ENCODE measurements at regions of chr22 and their contacts with region 1.

Region 1: GRCh38 chr22:30591588-30592359 is at the start of gene PES1:
- DNase-seq: peak; percentile 87
- ATAC-seq: peak; percentile 95
- H3K4me3 Mint-ChIP-seq: no peak within 1 kb of the TSS
- H3K27ac Mint-ChIP-seq: no peak within 1 kb of the TSS
- H3K4me1 Mint-ChIP-seq: no peaks in the 10 kb centered on the region
- H3K27me3 Mint-ChIP-seq: peaks cover 1% of the 10 kb centered on the region
- CTCF ChIP-seq: no peak
- total RNA-seq, gene PES1: 124 TPM in 2 replicates

Region 2: GRCh38 chr22:30262917-30263741 is 328.6 kb before region 1 on chr22:
- CTCF ChIA-PET with region 1: no interaction called
- POLR2A ChIA-PET with region 1: no interaction called
- intact Hi-C with region 1: loop called (anchors 5 kb)
- DNase-seq: peak; percentile 72
- ATAC-seq: peak; percentile 13
- H3K4me3 Mint-ChIP-seq: peak overlapping the region; percentile 59
- H3K27ac Mint-ChIP-seq: peak overlapping the region; percentile 18
- H3K4me1 Mint-ChIP-seq: peaks cover 27% of the 10 kb centered on the region
- H3K27me3 Mint-ChIP-seq: no peaks in the 10 kb centered on the region
- CTCF ChIP-seq: peak; percentile 97

Region 3: GRCh38 chr22:30606455-30607299 is 14.9 kb after region 1 on chr22 and contains the start of gene TCN2:
- CTCF ChIA-PET with region 1: no interaction called
- POLR2A ChIA-PET with region 1: interaction called, 8 read pairs
- intact Hi-C with region 1: loop called (anchors 1 kb)
- DNase-seq: peak; percentile 22
- ATAC-seq: peak; percentile 59
- H3K4me3 Mint-ChIP-seq: peak within 1 kb of the TSS; percentile 83
- H3K27ac Mint-ChIP-seq: peak within 1 kb of the TSS; percentile 20
- H3K4me1 Mint-ChIP-seq: peaks cover 35% of the 10 kb centered on the region
- H3K27me3 Mint-ChIP-seq: peaks cover 5% of the 10 kb centered on the region
- CTCF ChIP-seq: no peak
- total RNA-seq, gene TCN2: not detected in 2 replicates

Region 4: GRCh38 chr22:30920407-30920806 is 328.6 kb after region 1 on chr22:
- CTCF ChIA-PET with region 1: no interaction called
- POLR2A ChIA-PET with region 1: no interaction called
- intact Hi-C with region 1: loop called (anchors 5 kb)
- DNase-seq: peak; percentile 72
- ATAC-seq: peak; percentile 71
- H3K4me3 Mint-ChIP-seq: peak overlapping the region; percentile 58
- H3K27ac Mint-ChIP-seq: no peak overlapping the region
- H3K4me1 Mint-ChIP-seq: peaks cover 10% of the 10 kb centered on the region
- H3K27me3 Mint-ChIP-seq: no peaks in the 10 kb centered on the region
- CTCF ChIP-seq: peak; percentile 97

Region 5: DNA sequence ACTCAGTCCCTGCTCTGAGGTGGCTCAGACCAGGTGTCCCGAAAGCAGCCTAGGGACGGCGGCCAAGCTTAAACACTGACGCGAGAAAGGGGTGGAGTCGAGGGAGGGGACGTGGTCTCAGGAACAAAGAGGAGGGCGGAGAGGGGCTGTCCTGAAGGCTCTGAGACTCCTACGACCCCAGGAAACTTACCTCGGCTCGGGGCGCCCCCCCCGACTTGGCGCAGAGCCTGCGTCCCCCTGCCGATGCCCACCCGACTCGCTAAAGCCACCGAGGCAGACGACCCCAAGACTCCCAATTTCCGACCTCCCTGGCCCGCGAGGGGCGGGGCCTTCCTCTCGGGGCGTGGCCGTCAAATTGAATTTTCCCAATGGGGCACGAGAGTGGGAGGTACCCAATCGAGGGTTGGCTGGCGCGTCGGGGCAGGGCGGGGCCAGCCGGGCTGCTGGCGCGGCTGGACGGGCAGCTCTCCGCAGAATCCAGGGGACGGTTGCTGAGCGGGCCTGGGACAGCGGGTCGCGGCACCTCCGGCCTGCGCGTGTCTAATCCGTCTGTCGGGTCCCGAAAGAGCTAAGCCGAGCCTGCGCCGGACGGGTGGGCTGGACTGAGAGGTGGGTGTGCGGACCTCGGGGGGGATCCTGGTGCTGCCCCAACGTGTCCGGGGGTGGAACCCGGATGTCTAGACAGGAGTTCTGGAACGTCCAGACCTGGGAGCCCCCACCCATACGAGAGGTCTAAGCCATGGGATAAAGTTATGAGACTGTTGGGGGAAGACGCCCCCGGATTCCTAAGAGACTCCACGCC is 489.3 kb after region 1 on chr22 and contains the start of gene SMTN:
- CTCF ChIA-PET with region 1: no interaction called
- POLR2A ChIA-PET with region 1: no interaction called
- intact Hi-C with region 1: loop called (anchors 5 kb)
- DNase-seq: peak; percentile 93
- ATAC-seq: peak; percentile 75
- H3K4me3 Mint-ChIP-seq: peak within 1 kb of the TSS; percentile 90
- H3K27ac Mint-ChIP-seq: no peak within 1 kb of the TSS
- H3K4me1 Mint-ChIP-seq: peaks cover 36% of the 10 kb centered on the region
- H3K27me3 Mint-ChIP-seq: no peaks in the 10 kb centered on the region
- CTCF ChIP-seq: no peak
- total RNA-seq, gene SMTN: 2.8 and 3.1 TPM in 2 replicates